GM10248 (cell line): ENCODE measurements at regions of chr1 and their contacts with region 1.

Region 1: GRCh38 chr1:44652445-44653106 is 21.7 kb downstream of the TMEM53 start:
- DNase-seq: peak; percentile 84
- CTCF ChIP-seq: peak; percentile 98

Region 2: GRCh38 chr1:44217809-44218410 is 434.7 kb before region 1 on chr1:
- CTCF ChIA-PET with region 1: interaction called, 25 read pairs
- POLR2A ChIA-PET with region 1: no interaction called
- DNase-seq: peak; percentile 73
- CTCF ChIP-seq: peak; percentile 87

Region 3: GRCh38 chr1:44557778-44558177 is 94.8 kb before region 1 on chr1:
- CTCF ChIA-PET with region 1: interaction called, 13 read pairs
- POLR2A ChIA-PET with region 1: no interaction called
- DNase-seq: no peak
- CTCF ChIP-seq: no peak

Region 4: DNA sequence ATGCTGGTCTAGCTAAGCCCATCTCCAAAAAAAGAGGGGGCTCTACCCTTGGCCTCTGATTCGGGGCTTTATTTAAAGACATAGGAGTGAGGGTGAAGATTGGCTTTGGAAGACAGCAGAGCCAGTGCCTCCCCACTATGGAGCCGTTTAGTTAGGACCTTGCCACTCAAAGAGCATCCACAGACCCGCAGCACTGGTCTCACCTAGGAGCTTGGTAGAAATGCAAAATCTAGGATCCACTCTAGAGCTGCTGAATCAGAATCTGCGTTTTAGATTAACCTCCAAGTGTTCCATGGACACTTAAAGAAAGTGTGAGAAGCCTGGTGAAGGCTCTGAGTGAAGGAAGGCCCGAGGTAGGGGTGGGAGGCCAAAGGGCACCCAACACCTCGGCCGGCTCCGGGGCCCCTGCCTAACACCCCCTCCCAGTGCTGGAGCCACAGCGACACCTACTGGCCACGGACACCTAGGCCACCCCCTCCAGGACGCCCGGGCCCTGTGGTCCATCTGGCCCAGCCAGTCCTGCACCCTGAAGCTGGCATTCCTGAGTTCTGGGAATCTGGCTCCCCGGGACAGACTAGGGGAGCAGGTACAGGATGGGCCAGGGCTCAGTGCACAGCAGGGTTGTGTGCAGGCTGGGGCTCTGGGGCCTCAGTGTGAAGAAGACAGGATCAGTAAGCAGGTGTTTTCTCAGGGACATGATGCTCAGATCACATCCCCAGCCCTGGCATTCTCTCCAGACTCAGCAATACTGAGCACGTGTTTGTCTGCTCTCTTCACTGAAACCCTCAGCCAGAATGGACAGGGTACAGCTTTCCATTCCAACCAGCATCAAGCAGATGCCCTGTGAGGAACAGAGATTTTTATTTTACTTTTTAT is 57.5 kb before region 1 on chr1:
- CTCF ChIA-PET with region 1: interaction called, 10 read pairs
- POLR2A ChIA-PET with region 1: no interaction called
- DNase-seq: peak; percentile 92
- CTCF ChIP-seq: peak; percentile 97

Region 5: DNA sequence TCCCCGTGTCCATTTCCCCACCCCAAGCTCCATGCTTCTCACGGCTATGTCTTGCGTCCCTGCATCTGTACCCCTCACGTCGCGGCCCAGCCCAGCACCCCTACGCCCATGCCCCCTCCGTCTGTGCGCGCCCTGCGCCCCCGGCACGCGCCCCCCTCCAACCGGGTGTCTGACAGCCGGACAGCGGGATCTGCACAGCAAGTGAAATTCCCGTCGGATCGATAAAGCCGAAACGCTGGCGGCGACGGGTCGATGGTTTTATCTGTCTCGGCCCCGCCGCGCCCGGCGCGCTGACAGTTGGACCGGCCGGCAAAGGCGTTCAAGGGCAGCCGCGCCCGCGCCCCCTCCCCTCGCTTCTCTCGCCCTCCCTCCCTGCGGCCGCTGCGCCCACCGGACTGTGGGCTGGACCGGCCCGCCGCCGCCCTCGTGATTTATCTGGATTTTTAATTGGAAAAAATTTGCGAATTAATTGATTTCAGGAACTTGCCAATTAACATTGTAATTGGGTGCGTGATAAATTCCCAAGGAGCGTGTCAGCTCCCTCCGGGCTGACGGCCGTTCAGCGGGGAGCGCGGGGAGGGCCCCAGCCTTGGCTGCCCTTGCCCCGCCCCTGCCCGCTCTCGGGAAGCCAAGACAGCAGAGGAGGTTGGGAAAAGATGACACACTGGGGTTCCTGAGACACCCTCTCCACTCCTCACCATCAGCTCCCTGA is 35.4 kb before region 1 on chr1:
- CTCF ChIA-PET with region 1: interaction called, 79 read pairs
- POLR2A ChIA-PET with region 1: no interaction called
- DNase-seq: no peak
- CTCF ChIP-seq: no peak

Region 6: DNA sequence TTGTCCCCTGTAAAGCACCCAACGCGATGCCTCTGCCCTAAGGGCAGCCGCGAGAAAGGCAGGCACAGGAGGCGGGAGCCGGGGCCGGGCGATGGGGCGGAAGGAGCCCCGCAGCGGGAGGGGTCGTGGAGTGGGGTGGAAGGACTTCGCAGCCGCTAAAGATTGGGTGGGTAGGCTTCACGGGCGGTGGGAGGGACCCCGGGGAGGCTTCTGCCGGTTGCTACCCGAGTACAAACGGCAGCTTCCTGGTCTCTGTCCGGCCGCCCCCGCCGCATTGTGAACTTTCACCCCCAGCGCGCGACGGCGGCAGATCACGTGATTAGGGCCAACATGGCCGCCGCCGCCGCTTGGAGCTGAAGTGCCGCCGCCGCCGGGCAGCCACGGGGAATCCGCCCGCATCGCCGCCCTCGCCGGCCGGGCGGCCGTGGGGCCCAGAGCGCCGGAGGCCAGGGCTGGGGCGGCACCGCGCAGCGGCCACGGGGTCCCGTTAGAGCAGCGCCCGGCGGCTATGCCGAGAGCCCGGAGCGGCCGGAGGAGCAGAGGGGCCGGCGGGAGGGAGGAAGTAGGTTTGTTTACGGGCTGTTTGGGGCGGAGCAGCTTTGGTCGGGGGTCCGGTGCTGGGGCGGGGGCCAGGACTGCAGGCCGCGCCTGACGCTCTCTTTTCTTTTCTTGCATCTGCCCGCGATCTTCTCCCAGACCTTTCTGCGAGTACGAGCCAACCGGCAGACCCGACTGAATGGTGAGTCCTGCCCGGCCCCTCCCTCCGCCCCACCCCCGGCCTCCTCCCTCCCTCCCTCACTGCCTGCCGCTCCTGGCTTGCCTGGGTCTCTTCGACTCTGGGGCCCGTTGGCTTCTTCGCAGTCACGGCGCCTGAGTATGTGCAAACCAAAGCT is 20.7 kb before region 1 on chr1:
- CTCF ChIA-PET with region 1: interaction called, 204 read pairs
- POLR2A ChIA-PET with region 1: interaction called, 3 read pairs
- DNase-seq: peak; percentile 96
- CTCF ChIP-seq: no peak

Region 7: GRCh38 chr1:44674113-44675000 is 21.8 kb after region 1 on chr1 and contains the starts of genes ARMH1 and TMEM53:
- CTCF ChIA-PET with region 1: interaction called, 72 read pairs
- POLR2A ChIA-PET with region 1: no interaction called
- DNase-seq: peak; percentile 97
- CTCF ChIP-seq: no peak

Region 8: DNA sequence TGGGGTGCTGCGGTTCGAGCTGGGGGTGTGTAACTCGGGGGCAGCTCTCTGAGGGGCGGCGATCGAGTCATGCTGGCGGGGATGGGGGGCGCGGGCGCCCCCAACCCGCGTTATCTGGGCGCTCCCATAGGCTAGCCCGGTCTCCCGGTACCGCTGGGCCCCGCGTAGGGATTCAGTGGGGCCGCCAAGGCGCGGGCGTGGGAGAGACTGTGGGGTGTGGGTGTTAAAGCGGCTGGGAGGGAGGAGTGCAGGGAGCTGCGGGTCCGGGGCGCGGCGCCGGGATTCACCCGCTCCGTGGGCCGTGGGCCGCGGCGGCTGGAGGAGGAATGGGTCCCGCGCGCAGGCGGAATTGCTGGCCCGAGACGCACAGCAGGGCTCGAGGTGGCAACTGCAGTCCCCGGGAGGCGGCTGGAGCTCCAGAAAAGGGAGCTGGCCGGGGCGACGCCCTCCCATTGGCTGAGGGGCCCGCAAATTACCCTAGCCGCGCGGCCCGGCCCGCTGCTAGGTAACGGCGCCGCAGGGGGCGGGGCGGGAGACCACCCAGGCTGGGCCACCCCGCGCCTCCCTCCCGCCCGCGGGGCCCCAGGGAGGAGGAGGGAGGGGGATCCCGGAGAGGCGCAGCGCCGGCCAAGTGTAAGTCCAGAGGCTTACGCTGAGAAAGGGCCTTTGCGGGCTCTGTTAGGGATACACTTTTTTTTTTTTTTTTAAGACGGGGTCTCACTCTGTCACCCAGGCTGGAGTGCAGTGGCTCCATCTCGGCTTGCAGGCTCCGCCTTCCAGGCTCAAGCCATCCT is 190.5 kb after region 1 on chr1 and contains the start of gene PTCH2:
- CTCF ChIA-PET with region 1: no interaction called
- POLR2A ChIA-PET with region 1: no interaction called
- DNase-seq: peak; percentile 62
- CTCF ChIP-seq: no peak